A549 (cell line): ENCODE measurements at regions of chr19 and their contacts with region 1.

Region 1: DNA sequence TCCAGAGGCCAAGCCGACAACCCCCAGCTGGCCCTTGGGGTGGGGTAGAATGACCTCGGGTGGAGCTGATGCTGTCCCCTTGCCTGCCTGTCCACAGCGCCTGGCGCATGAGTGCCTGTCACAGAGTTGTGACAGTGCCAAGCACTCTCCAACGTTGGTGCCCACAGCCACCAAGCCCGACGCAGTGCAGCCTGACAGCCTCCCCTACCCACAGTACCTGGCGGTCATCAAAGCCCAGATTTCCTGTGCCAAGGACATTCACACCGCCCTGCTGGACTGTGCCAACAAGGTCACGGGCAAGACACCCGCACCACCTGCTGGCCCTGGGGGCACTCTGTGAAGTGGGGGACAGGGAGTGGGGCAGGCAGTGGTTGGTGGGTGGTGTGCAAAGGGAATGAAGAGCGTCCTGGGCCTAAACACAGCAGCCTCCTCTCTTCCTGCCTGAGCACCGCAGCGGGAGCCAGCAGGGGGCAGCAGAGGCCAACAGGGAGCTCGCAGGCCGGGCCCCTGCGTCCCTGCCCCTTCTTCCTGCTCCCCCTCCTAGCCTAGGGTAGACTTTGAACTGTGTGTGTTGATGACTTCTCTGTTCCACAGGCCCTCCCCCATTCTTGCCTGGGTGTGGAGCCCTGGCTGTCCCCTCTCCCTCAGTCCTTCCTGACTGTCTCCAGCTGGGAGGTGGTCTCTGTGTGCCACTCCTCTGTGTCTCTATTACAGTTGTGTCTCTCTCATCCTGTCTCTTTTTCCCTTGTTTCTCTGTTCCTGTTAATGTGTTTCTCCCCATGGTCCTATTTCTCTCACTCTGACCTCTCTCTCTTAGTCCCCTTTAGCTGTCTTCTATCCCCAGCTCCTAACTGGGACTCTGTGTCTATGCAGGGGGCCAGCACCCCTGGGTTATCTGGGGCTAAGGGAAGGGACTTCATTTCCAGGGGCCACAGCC is 6.5 kb downstream of the MED29 start:
- DNase-seq: peak; percentile 98 to 99
- ATAC-seq: peak; percentile 52 to 84
- H3K4me3 ChIP-seq: peak overlapping the region; percentile 22; the same call in 2 of the 3 replicates
- H3K27ac ChIP-seq: peak overlapping the region; percentile 92 to 99
- H3K4me1 ChIP-seq: peaks cover 56% of the 10 kb centered on the region
- CTCF ChIP-seq: peak; percentile 100
- EP300 ChIP-seq: no peak; a peak in 1 of 5 replicates
- POLR2A ChIP-seq: peak; percentile 47; the same call in 1 of the 2 replicates
- RAD21 ChIP-seq: peak; percentile 100

Region 2: DNA sequence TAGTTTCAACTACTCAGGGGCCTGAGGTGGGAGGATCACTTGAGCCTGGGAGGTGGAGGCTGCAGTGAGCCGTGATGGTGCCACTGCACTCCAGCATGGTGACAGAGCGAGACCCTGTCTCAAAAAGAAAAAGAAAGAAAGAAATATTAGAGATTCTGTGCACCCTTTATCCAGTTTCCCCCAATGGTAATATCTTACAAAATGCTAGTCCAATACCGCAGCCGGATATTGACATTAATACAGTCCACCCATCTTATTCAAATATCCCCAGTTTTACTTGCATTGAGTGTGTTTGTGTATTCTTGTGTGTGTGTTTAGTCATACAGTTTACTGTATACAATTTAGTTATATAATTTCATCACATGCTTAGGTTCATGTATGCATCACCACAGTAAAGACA is 140.4 kb before region 1 on chr19:
- CTCF ChIA-PET with region 1: no interaction called
- POLR2A ChIA-PET with region 1: no interaction called
- DNase-seq: no peak
- ATAC-seq: no peak
- H3K4me3 ChIP-seq: no peak overlapping the region
- H3K27ac ChIP-seq: no peak overlapping the region
- H3K4me1 ChIP-seq: no peaks in the 10 kb centered on the region
- CTCF ChIP-seq: no peak
- EP300 ChIP-seq: no peak
- POLR2A ChIP-seq: no peak
- RAD21 ChIP-seq: no peak

Region 3: DNA sequence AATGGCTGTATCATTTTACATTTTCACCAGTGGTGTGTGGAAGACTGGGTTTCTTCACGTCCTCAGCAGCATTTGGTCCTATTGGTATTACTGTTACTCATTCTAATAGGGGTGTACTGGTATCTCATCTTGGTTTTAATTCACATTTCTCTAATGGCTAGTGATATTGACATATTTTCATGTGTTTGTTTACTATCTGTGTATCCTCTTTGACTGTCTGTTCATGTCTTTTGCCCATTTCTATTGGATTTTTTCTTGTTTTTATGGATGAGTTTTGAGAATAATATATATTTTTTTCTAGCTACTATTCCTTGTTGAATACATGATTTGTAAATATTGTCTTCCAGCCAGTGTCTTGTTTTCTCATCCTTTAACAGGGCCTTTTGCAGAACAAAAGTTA is 115.6 kb before region 1 on chr19:
- CTCF ChIA-PET with region 1: no interaction called
- POLR2A ChIA-PET with region 1: no interaction called
- DNase-seq: no peak
- ATAC-seq: no peak
- H3K4me3 ChIP-seq: no peak overlapping the region
- H3K27ac ChIP-seq: no peak overlapping the region
- H3K4me1 ChIP-seq: peaks cover 3% of the 10 kb centered on the region; the same call in 1 of the 3 replicates
- CTCF ChIP-seq: no peak
- EP300 ChIP-seq: no peak
- POLR2A ChIP-seq: no peak
- RAD21 ChIP-seq: no peak

Region 4: GRCh38 chr19:39351537-39352064 is 46.0 kb before region 1 on chr19:
- CTCF ChIA-PET with region 1: interaction called, 31 read pairs
- POLR2A ChIA-PET with region 1: no interaction called
- DNase-seq: peak in 1 of 2 experiments; percentile 42
- ATAC-seq: no peak
- H3K4me3 ChIP-seq: no peak overlapping the region
- H3K27ac ChIP-seq: no peak overlapping the region
- H3K4me1 ChIP-seq: peaks cover 6% of the 10 kb centered on the region; the same call in 1 of the 3 replicates
- CTCF ChIP-seq: no peak
- EP300 ChIP-seq: 0 out of 5 replicates have a peak, but pooled peaks of 1 of the 2 experiments have one; percentile 18
- POLR2A ChIP-seq: no peak
- RAD21 ChIP-seq: no peak

Region 5: GRCh38 chr19:39372047-39372802 is 25.4 kb before region 1 on chr19:
- CTCF ChIA-PET with region 1: interaction called, 25 read pairs
- POLR2A ChIA-PET with region 1: no interaction called
- DNase-seq: no peak
- ATAC-seq: no peak
- H3K4me3 ChIP-seq: no peak overlapping the region
- H3K27ac ChIP-seq: no peak overlapping the region
- H3K4me1 ChIP-seq: no peaks in the 10 kb centered on the region
- CTCF ChIP-seq: no peak
- EP300 ChIP-seq: no peak
- POLR2A ChIP-seq: no peak
- RAD21 ChIP-seq: no peak

Region 6: GRCh38 chr19:39412100-39412866 is 14.7 kb after region 1 on chr19 and contains the start of gene PLEKHG2:
- CTCF ChIA-PET with region 1: interaction called, 484 read pairs
- POLR2A ChIA-PET with region 1: interaction called, 122 read pairs
- DNase-seq: peak; percentile 100
- ATAC-seq: peak; percentile 40 to 66
- H3K4me3 ChIP-seq: peak within 1 kb of the TSS; percentile 76
- H3K27ac ChIP-seq: peak within 1 kb of the TSS; percentile 94 to 99
- H3K4me1 ChIP-seq: peaks cover 43% of the 10 kb centered on the region
- CTCF ChIP-seq: peak; percentile 99
- EP300 ChIP-seq: peak in 1 of 2 experiments; percentile 61; a peak in 1 of 5 replicates
- POLR2A ChIP-seq: peak; percentile 64
- RAD21 ChIP-seq: peak; percentile 55 to 82
- polyA plus RNA-seq, gene PLEKHG2: 21.6 and 35.1 TPM in 2 replicates

Region 7: DNA sequence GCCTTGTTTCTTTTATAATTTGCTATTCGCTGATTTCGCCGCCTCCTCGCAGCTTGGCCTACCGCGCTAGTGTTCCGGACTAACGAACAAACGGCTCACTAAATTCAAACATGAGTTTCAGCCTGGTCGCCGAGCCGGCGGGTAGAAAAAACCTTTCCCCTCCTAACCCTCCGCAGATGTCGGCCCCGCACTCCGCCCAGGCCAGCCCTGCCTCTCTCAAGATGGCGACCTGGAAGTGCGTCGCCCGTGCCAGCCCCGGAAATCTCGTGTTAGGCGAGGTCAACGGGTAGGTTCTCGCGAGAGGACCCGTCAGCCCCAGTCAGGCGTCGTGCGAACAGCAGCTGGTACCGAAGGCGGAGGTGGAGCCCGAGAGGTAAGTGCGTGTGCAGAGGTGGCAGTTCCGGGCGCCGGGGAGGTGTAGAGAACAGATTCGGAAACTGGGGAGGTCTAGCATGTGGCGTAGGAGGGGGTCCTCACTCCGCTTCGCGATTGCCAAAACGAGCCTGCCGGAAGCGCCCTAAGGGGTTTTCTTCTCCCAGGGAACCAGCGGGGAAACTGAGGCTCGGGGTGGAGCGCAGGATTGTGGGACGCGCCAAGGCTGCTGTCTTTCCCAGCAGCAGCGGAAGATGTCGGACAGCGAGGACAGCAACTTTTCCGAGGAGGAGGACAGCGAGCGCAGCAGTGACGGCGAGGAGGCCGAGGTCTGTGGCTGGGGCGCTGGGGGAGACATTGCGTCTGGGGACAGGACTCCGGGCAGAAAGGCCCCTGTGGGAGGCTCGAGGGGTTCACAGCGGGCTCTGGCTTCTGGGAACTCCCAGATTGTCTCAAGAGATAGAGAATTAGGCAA is 47.9 kb after region 1 on chr19 and contains the start of gene SUPT5H:
- CTCF ChIA-PET with region 1: interaction called, 39 read pairs
- POLR2A ChIA-PET with region 1: interaction called, 3 read pairs
- DNase-seq: peak; percentile 100
- ATAC-seq: peak; percentile 94 to 97
- H3K4me3 ChIP-seq: peak within 1 kb of the TSS; percentile 80
- H3K27ac ChIP-seq: peak within 1 kb of the TSS; percentile 86 to 90
- H3K4me1 ChIP-seq: peaks cover 28% of the 10 kb centered on the region
- CTCF ChIP-seq: no peak
- EP300 ChIP-seq: no peak
- POLR2A ChIP-seq: peak; percentile 94
- RAD21 ChIP-seq: no peak
- polyA plus RNA-seq, gene SUPT5H: 133 and 186 TPM in 2 replicates

Region 8: DNA sequence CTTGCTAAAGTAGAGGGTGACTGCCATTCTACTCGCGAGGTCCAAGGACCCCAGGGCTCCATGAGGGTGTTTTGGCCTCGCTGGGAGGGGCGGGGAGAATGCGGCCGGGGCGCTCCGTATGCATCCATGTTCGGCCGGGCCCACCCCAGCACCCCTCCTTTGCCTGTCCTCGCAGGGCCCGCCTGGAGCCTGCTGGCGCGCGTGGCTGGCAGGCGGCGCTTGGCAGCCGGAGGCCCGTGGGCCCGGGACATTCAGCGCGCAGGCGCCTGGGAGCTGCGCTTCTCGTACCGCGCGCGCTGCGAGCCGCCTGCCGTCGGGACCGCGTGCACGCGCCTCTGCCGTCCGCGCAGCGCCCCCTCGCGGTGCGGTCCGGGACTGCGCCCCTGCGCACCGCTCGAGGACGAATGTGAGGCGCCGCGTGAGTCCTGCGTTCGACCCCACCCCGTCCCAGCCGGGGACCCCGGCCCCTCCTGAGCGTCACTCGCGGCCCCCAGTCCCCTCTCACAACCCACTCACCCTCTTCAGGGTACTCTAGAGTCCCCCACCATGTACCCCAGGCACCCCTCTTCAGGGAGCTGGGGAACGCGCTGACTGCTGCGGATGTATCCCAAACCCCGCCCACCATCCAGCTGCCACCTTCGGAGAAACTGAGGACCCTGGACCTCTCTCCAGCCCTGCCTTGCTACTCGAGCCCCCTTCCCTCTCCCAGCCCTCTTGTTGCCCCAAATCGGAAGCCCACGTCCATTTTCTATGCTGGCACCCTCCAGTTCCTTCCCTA is 105.2 kb after region 1 on chr19:
- CTCF ChIA-PET with region 1: interaction called, 11 read pairs
- POLR2A ChIA-PET with region 1: no interaction called
- DNase-seq: peak; percentile 94 to 97
- ATAC-seq: peak in 1 of 2 experiments; percentile 39; a peak in 4 of 6 replicates
- H3K4me3 ChIP-seq: peak overlapping the region; percentile 16; the same call in 1 of the 3 replicates
- H3K27ac ChIP-seq: peak overlapping the region; percentile 6 to 57; a peak in 2 of 6 replicates
- H3K4me1 ChIP-seq: peaks cover 25% of the 10 kb centered on the region
- CTCF ChIP-seq: peak; percentile 99
- EP300 ChIP-seq: no peak
- POLR2A ChIP-seq: no peak
- RAD21 ChIP-seq: peak in 1 of 2 experiments; percentile 58; a peak in 4 of 5 replicates

Region 9: GRCh38 chr19:39546599-39546998 is 149.0 kb after region 1 on chr19:
- CTCF ChIA-PET with region 1: interaction called, 16 read pairs
- POLR2A ChIA-PET with region 1: no interaction called
- DNase-seq: peak in 1 of 2 experiments; percentile 45
- ATAC-seq: peak in 1 of 2 experiments; percentile 17; a peak in 2 of 6 replicates
- H3K4me3 ChIP-seq: no peak overlapping the region
- H3K27ac ChIP-seq: no peak overlapping the region
- H3K4me1 ChIP-seq: no peaks in the 10 kb centered on the region
- CTCF ChIP-seq: no peak
- EP300 ChIP-seq: no peak
- POLR2A ChIP-seq: no peak
- RAD21 ChIP-seq: no peak